ENCODE measurements at regions of chr13 and their contacts with region 1.

Region 1: GRCh38 chr13:49353908-49354307 is 90.0 kb downstream of the CAB39L start:
- DNase-seq: no peak
- ATAC-seq: no peak
- H3K4me3 ChIP-seq: no peak overlapping the region
- H3K4me3 Mint-ChIP-seq: no peak overlapping the region
- H3K27ac ChIP-seq: no peak overlapping the region
- H3K27ac Mint-ChIP-seq: no peak overlapping the region
- H3K4me1 ChIP-seq: no peaks in the 10 kb centered on the region
- H3K4me1 Mint-ChIP-seq: peaks cover 0 to 8% (median 0%) of the 10 kb centered on the region in 7 donors
- H3K27me3 ChIP-seq: no peaks in the 10 kb centered on the region
- H3K27me3 Mint-ChIP-seq: no peaks in the 10 kb centered on the region

Region 2: DNA sequence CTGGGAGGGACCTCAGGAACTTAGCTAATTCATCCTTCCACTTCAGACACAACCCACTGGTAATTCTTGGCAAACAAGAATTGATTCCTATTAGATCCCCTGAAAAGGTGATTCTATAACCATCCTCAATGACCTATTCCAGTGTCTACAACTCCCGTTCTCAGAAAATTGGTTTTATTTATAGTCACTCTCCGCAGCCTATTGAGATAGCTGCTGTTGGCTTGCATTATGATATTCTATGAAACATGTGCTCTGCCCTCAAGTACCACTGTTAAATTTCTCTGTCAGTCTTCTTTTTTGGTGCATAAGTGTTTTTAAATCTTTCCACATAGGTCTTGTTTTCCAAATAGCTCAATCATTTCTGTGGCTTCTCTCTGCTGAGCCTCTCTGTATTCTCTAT is 31.2 kb before region 1 on chr13:
- CTCF ChIA-PET with region 1: no interaction called
- POLR2A ChIA-PET with region 1: no interaction called
- intact Hi-C with region 1: loop called in 1 of 2 experiments (anchors 1 kb)
- DNase-seq: no peak
- ATAC-seq: no peak
- H3K4me3 ChIP-seq: no peak overlapping the region
- H3K4me3 Mint-ChIP-seq: no peak overlapping the region
- H3K27ac ChIP-seq: no peak overlapping the region
- H3K27ac Mint-ChIP-seq: no peak overlapping the region
- H3K4me1 ChIP-seq: no peaks in the 10 kb centered on the region
- H3K4me1 Mint-ChIP-seq: peaks cover 5 to 14% (median 12%) of the 10 kb centered on the region in 7 donors
- H3K27me3 ChIP-seq: no peaks in the 10 kb centered on the region
- H3K27me3 Mint-ChIP-seq: no peaks in the 10 kb centered on the region

Measured in naive thymus-derived CD4-positive, alpha-beta T cell (primary cell).